ENCODE measurements at regions of chr16 and their contacts with region 1.

Region 1: GRCh38 chr16:80580109-80580832 is 39.5 kb downstream of the DYNLRB2 start:
- DNase-seq: peak; percentile 90
- H3K4me3 Mint-ChIP-seq: peak overlapping the region; percentile 59
- H3K27ac Mint-ChIP-seq: peak overlapping the region; percentile 91
- H3K4me1 Mint-ChIP-seq: peaks cover 46% of the 10 kb centered on the region
- H3K27me3 Mint-ChIP-seq: no peaks in the 10 kb centered on the region

Region 2: GRCh38 chr16:80027007-80027965 is 553.0 kb before region 1 on chr16:
- CTCF ChIA-PET with region 1: no interaction called
- intact Hi-C with region 1: loop called (anchors 2 kb)
- DNase-seq: peak; percentile 78
- H3K4me3 Mint-ChIP-seq: peak overlapping the region; percentile 19
- H3K27ac Mint-ChIP-seq: no peak overlapping the region
- H3K4me1 Mint-ChIP-seq: peaks cover 9% of the 10 kb centered on the region
- H3K27me3 Mint-ChIP-seq: peaks cover 17% of the 10 kb centered on the region

Region 3: GRCh38 chr16:80526425-80527061 is 53.7 kb before region 1 on chr16:
- CTCF ChIA-PET with region 1: interaction called, 16 read pairs
- intact Hi-C with region 1: no loop called
- DNase-seq: peak; percentile 74
- H3K4me3 Mint-ChIP-seq: no peak overlapping the region
- H3K27ac Mint-ChIP-seq: no peak overlapping the region
- H3K4me1 Mint-ChIP-seq: no peaks in the 10 kb centered on the region
- H3K27me3 Mint-ChIP-seq: no peaks in the 10 kb centered on the region

Region 4: GRCh38 chr16:80569440-80570105 is 10.7 kb before region 1 on chr16:
- CTCF ChIA-PET with region 1: interaction called, 3 read pairs
- intact Hi-C with region 1: loop called (anchors 1 kb)
- DNase-seq: peak; percentile 91
- H3K4me3 Mint-ChIP-seq: no peak overlapping the region
- H3K27ac Mint-ChIP-seq: peak overlapping the region; percentile 43
- H3K4me1 Mint-ChIP-seq: peaks cover 30% of the 10 kb centered on the region
- H3K27me3 Mint-ChIP-seq: no peaks in the 10 kb centered on the region

Region 5: GRCh38 chr16:80671281-80671849 is 91.1 kb after region 1 on chr16:
- CTCF ChIA-PET with region 1: no interaction called
- intact Hi-C with region 1: loop called (anchors 5 kb)
- DNase-seq: no peak
- H3K4me3 Mint-ChIP-seq: no peak overlapping the region
- H3K27ac Mint-ChIP-seq: no peak overlapping the region
- H3K4me1 Mint-ChIP-seq: peaks cover 19% of the 10 kb centered on the region
- H3K27me3 Mint-ChIP-seq: no peaks in the 10 kb centered on the region

Region 6: DNA sequence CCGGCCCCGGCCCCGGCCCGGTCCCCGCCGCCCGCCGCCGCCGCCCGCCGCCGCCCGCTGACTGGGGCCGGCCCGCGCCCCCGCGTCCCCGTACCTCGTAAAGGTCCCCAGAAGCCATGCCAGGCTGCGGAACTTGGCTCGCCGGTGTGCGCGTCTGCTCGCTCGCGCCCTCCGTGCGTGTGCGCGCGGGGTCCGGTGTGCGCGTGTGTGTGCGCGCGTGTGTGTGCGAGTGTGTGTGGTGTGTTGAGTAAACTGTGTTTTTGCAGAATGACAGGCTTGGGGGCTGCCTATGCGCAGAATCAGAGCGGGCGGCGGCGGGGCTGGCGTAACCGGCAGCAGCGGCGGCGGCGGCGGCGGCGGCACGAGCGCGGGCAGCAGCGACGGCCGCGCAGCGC is 223.8 kb after region 1 on chr16:
- CTCF ChIA-PET with region 1: interaction called, 7 read pairs
- intact Hi-C with region 1: loop called (anchors 1 kb)
- DNase-seq: peak; percentile 63
- H3K4me3 Mint-ChIP-seq: peak overlapping the region; percentile 88
- H3K27ac Mint-ChIP-seq: peak overlapping the region; percentile 80
- H3K4me1 Mint-ChIP-seq: peaks cover 31% of the 10 kb centered on the region
- H3K27me3 Mint-ChIP-seq: peaks cover 4% of the 10 kb centered on the region

Region 7: DNA sequence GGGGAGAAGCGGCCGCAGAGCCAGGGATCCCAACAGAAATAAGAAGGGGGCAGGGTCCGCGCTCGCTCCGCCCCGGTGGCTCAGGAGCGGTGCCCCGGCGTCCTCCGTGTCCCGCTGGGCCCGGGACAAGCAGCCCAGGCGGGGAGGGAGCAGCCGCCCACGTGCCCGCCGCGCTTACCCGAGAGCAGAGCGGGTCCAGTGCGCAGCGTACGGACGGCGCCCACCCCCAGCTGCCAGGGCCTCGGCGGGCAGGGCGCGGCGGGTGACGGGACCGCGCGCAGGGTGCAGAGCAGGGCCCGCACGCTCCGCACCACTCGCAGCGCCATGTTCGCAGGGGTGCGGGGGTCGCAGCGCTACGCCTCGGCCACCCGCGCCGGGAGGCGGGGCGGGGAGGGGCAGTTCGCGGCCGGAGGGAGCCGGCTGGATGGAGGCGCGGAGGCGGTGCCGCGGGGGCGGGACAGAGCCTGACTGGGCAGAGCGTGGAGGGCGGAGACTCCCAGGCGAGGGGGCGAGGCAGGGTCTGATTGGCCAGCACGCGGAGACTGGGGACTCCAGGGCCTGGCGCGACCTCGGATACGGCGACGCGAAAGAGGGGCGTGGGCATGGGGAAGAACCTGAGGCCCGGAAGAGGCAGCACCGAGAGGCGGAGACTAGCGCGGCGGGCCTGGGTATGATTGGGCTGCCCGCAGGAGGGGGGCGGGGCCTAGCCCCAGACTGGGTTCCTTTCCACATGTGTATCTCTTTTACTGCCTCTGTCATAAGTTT is 515.9 kb after region 1 on chr16 and contains the start of gene GCSH:
- CTCF ChIA-PET with region 1: no interaction called
- intact Hi-C with region 1: loop called (anchors 5 kb)
- DNase-seq: peak; percentile 98
- H3K4me3 Mint-ChIP-seq: peak within 1 kb of the TSS; percentile 78
- H3K27ac Mint-ChIP-seq: peak within 1 kb of the TSS; percentile 51
- H3K4me1 Mint-ChIP-seq: peaks cover 17% of the 10 kb centered on the region
- H3K27me3 Mint-ChIP-seq: no peaks in the 10 kb centered on the region
- total RNA-seq, gene GCSH: 25.7 to 27.4 TPM